Sigmoid colon (tissue), 7 donors: ENCODE measurements at regions of chr17 and their contacts with region 1.

Region 1: GRCh38 chr17:44141717-44142285 is at the start of gene HROB:
- DNase-seq: peak; percentile 97
- H3K4me3 ChIP-seq: peak within 1 kb of the TSS; percentile 46 to 67 (median 60)
- H3K27ac ChIP-seq: peak within 1 kb of the TSS; percentile 45 to 73 (median 58)
- H3K4me1 ChIP-seq: peaks cover 0 to 27% (median 22%) of the 10 kb centered on the region in 4 donors
- H3K27me3 ChIP-seq: no peaks in the 10 kb centered on the region
- CTCF ChIP-seq: peak; percentile 77 to 86 (median 84)
- EP300 ChIP-seq: no peak
- POLR2A ChIP-seq: no peak
- total RNA-seq, gene HROB: 0.36 to 3.3 (median 0.52) TPM

Region 2: GRCh38 chr17:44170499-44171201 is 28.8 kb after region 1 on chr17 and contains the start of gene ASB16:
- intact Hi-C with region 1: loop called (anchors 2 kb)
- DNase-seq: no peak
- H3K4me3 ChIP-seq: peak within 1 kb of the TSS; percentile 31 to 55 (median 48)
- H3K27ac ChIP-seq: peak within 1 kb of the TSS; percentile 79 to 90 (median 84)
- H3K4me1 ChIP-seq: peaks cover 0 to 32% (median 23%) of the 10 kb centered on the region in 4 donors
- H3K27me3 ChIP-seq: no peaks in the 10 kb centered on the region
- CTCF ChIP-seq: no peak
- EP300 ChIP-seq: peak in 1 of 4 donors; percentile 68
- POLR2A ChIP-seq: no peak
- total RNA-seq, gene ASB16: 0.82 to 4.2 (median 1.6) TPM